Common myeloid progenitor, CD34-positive (primary cell): ENCODE measurements at regions of chr2 and their contacts with region 1.

Region 1: DNA sequence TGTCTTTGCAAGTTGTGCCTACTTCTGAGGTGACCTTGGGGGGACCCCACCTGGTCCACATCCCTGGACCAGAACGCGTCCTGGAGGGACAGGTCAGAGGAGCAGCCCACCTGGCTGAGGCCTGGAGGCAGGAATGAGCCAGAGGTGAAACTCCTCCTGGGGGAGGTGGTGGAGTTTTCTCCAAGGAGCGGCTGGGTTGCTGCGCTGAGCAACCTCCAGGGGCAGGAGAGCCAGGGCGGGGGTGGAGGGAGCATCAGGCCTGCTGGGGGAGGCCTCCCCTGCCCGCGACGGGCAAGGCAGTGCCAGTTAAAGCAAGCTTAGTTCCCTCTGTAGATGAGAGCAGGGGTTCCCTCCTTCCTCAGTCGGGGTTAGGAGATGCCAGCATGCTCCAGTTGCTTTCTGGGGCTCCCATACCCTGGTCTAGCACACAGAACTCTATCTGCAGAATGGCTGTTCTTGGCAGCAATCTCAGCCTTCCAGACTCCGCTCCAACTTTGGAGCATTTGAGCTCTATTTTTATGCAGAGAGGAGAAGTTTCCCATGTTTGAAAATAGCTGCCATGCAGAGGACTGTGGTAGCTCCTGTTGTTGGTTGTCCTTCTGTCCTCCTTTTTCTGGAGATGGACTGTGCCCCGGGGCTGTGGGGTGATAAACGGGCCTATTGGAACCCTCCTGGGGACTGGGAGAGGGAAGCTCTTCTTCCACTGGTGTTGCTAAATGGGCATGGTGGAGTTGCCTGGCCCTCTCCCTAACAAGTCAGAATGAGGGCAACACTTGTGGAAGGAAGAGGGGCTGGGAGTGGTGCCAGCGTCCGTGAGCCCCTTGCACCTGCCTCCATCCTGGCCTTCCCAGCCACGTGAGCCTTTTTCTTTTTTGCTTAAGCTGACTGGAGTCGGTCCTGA is 39.1 kb downstream of the B3GNT2 start:
- DNase-seq: no peak
- H3K4me3 ChIP-seq: no peak overlapping the region
- H3K27ac ChIP-seq: no peak overlapping the region
- H3K4me1 ChIP-seq: peaks cover 0 to 20% (median 12%) of the 10 kb centered on the region in 4 experiments
- H3K27me3 ChIP-seq: no peaks in the 10 kb centered on the region

Region 2: GRCh38 chr2:62216616-62217015 is 18.4 kb before region 1 on chr2:
- CTCF ChIA-PET with region 1: interaction called, 16 read pairs
- POLR2A ChIA-PET with region 1: no interaction called
- DNase-seq: no peak
- H3K4me3 ChIP-seq: no peak overlapping the region
- H3K27ac ChIP-seq: peak overlapping the region in 1 of 2 experiments; percentile 37
- H3K4me1 ChIP-seq: peaks cover 0 to 46% (median 16%) of the 10 kb centered on the region in 4 experiments
- H3K27me3 ChIP-seq: no peaks in the 10 kb centered on the region